ENCODE measurements at regions of chr2 and their contacts with region 1.

Region 1: DNA sequence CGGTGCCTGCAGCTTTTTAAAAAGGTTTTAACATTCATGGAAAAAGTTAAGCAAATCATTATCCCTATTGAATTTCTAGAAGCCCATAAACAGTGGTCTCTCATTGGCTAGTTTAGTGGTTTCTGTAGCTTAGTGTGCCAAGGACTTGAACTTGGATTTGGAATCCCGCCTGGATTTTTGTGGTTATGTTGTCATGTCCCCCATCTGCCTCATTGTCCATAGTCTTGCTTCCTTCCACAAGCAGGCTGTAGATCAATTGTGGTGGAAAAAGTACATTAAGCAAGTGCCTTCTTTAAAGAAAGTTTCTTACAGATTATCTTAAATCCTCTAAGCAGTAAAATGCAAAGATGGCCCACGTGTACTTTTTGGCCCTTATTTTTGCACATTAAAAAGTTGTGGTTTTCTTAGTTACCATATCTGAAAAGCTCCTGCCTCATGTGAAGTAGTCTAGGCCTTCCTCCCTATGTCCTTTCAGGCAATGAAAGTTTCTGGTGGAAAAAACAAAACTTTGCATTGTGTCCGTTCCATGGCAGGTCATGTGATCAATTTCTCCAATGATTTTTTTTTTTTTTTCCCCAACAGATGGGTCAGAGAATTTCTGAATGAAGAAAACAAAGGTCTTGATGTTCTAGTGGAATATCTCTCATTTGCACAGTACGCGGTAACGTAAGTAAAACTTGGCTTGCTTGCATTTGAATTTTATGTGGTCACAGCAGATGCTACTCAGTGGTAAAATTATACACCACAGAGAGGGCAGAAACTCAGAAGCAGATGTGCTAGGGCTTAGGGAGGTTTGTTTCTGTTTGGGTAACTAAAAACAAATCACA is 158.9 kb downstream of the PRPF40A start:
- H3K4me3 Mint-ChIP-seq: no peak overlapping the region
- H3K27ac Mint-ChIP-seq: no peak overlapping the region
- H3K4me1 Mint-ChIP-seq: no peaks in the 10 kb centered on the region
- H3K27me3 Mint-ChIP-seq: no peaks in the 10 kb centered on the region

Region 2: GRCh38 chr2:152594022-152594766 is 35.8 kb after region 1 on chr2:
- intact Hi-C with region 1: no loop called
- H3K4me3 Mint-ChIP-seq: no peak overlapping the region
- H3K27ac Mint-ChIP-seq: peak overlapping the region; percentile 85
- H3K4me1 Mint-ChIP-seq: peaks cover 36% of the 10 kb centered on the region
- H3K27me3 Mint-ChIP-seq: peaks cover 1% of the 10 kb centered on the region

Region 3: GRCh38 chr2:152627351-152627957 is 69.1 kb after region 1 on chr2:
- intact Hi-C with region 1: loop called (anchors 2 kb)
- H3K4me3 Mint-ChIP-seq: no peak overlapping the region
- H3K27ac Mint-ChIP-seq: no peak overlapping the region
- H3K4me1 Mint-ChIP-seq: peaks cover 8% of the 10 kb centered on the region
- H3K27me3 Mint-ChIP-seq: no peaks in the 10 kb centered on the region

Region 4: GRCh38 chr2:152657043-152657442 is 98.7 kb after region 1 on chr2:
- intact Hi-C with region 1: no loop called
- H3K4me3 Mint-ChIP-seq: no peak overlapping the region
- H3K27ac Mint-ChIP-seq: no peak overlapping the region
- H3K4me1 Mint-ChIP-seq: no peaks in the 10 kb centered on the region
- H3K27me3 Mint-ChIP-seq: no peaks in the 10 kb centered on the region

Region 5: GRCh38 chr2:152907046-152907445 is 348.7 kb after region 1 on chr2:
- intact Hi-C with region 1: no loop called
- H3K4me3 Mint-ChIP-seq: no peak overlapping the region
- H3K27ac Mint-ChIP-seq: no peak overlapping the region
- H3K4me1 Mint-ChIP-seq: no peaks in the 10 kb centered on the region
- H3K27me3 Mint-ChIP-seq: no peaks in the 10 kb centered on the region